ENCODE measurements at regions of chr16 and their contacts with region 1.

Region 1: GRCh38 chr16:4307215-4308037 is 8.4 kb upstream of the GLIS2 start:
- DNase-seq: peak; percentile 97 to 98 (median 97)
- ATAC-seq: peak; percentile 96
- H3K4me3 ChIP-seq: peak overlapping the region; percentile 94
- H3K4me3 Mint-ChIP-seq: peak overlapping the region; percentile 90 to 98 (median 94)
- H3K27ac ChIP-seq: peak overlapping the region; percentile 90
- H3K27ac Mint-ChIP-seq: peak overlapping the region; percentile 94 to 99 (median 95)
- H3K4me1 ChIP-seq: peaks cover 15 to 17% of the 10 kb centered on the region in 2 donors
- H3K4me1 Mint-ChIP-seq: peaks cover 13 to 30% (median 23%) of the 10 kb centered on the region in 7 donors
- H3K27me3 ChIP-seq: no peaks in the 10 kb centered on the region
- H3K27me3 Mint-ChIP-seq: peaks cover 0 to 2% (median 0%) of the 10 kb centered on the region in 5 donors

Region 2: DNA sequence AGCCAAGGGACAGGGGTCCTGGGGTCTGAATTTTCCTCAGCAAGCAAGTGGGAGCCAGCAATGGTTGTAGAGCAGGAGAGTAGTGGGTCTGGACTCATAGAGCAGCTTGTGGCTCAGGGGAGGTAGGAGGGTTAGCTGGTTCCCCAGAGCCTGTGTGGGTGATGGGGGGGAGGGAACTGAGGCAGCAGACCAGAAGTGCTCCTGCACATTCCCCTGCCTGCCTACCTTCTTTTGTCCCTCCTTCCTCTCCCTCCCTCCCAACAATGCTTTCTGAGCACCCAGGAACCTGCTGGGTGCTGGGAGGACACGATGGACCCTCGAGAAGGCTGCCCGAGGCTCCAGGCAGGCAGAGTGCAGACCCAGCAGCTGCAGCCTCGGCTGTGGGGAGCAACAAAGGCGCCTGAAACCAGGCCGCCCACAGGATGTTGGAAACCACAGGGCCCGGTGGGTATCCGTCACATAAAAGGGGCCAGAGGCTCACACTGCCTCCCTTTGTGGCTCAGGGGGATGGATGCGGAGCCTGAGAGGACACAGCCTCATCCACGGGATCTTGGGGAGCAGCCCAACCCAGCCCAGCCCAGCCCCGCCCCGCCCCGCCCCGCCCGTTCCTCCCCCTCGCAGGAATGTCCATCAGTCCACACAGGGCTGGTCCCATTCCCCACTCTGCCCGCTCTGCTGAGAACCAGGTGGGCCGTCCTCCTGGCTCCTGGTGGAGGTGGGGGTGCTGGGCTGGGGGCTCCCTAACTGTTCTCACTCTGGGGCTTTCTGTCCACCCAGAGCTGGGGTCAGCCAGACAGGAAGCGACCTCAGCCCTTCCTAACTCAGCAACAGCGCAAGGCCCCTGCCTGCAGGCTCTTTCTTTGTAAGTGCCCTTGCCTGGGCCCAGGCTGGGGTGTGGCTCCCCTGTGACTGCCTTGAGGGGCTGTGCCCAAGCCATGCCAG is 728.5 kb before region 1 on chr16:
- CTCF ChIA-PET with region 1: no interaction called
- POLR2A ChIA-PET with region 1: no interaction called
- intact Hi-C with region 1: no loop called
- DNase-seq: peak in 5 of 9 donors; percentile 15 to 70 (median 29)
- ATAC-seq: peak; percentile 64
- H3K4me3 ChIP-seq: peak overlapping the region; percentile 39
- H3K4me3 Mint-ChIP-seq: peak overlapping the region; percentile 82 to 100 (median 98)
- H3K27ac ChIP-seq: peak overlapping the region; percentile 90
- H3K27ac Mint-ChIP-seq: peak overlapping the region; percentile 83 to 97 (median 95)
- H3K4me1 ChIP-seq: peaks cover 27 to 36% of the 10 kb centered on the region in 2 donors
- H3K4me1 Mint-ChIP-seq: peaks cover 19 to 59% (median 47%) of the 10 kb centered on the region in 7 donors
- H3K27me3 ChIP-seq: no peaks in the 10 kb centered on the region
- H3K27me3 Mint-ChIP-seq: no peaks in the 10 kb centered on the region

Region 3: DNA sequence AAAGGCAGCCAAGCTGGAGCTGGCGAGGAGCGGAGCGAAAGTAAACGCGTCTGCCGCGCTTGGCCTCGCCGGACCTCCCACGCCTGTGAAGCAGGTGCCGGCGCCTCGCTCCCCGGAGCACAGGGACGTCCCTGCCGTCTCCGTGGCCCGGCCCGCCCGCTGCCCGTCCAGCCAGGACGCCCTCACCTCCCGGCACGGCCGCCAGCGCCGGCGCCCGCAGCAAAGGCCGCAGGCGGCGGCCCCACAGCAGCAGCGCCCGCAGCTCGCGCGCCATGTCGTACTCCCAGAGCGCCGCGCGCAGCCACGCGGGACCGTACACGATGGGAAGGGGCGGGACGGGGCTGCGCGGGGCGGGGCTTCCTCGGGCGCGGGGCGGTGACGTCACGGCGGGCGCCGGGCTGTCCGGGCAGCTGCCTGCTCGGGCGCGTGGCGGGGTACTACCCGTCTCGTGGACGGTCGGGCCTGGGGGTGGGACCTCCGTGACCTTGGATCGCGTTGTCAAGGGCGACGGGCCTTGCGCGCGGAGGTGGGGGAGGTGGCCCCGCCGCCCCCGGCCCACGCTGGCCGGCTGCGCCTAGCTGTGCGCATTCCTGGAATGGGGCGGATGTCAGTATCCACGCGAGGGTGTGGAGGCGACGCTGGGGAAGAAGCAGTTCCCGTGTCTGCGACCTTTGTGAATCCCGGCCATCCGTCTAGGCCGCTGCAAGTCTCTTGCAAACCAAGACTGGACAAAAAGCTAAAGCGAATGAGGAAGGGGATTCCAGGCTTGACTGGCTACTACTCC is 590.0 kb before region 1 on chr16 and contains the start of gene TRAP1:
- CTCF ChIA-PET with region 1: no interaction called
- POLR2A ChIA-PET with region 1: no interaction called
- intact Hi-C with region 1: loop called in 1 of 2 experiments (anchors 2 kb)
- DNase-seq: peak; percentile 81 to 96 (median 88)
- ATAC-seq: peak; percentile 98
- H3K4me3 ChIP-seq: peak within 1 kb of the TSS; percentile 67
- H3K4me3 Mint-ChIP-seq: peak within 1 kb of the TSS; percentile 81 to 94 (median 89)
- H3K27ac ChIP-seq: peak within 1 kb of the TSS; percentile 94
- H3K27ac Mint-ChIP-seq: peak within 1 kb of the TSS; percentile 67 to 96 (median 92)
- H3K4me1 ChIP-seq: peaks cover 6 to 11% of the 10 kb centered on the region in 2 donors
- H3K4me1 Mint-ChIP-seq: peaks cover 14 to 47% (median 38%) of the 10 kb centered on the region in 7 donors
- H3K27me3 ChIP-seq: no peaks in the 10 kb centered on the region
- H3K27me3 Mint-ChIP-seq: no peaks in the 10 kb centered on the region
- total RNA-seq, gene TRAP1: 96.8 to 138 (median 132) TPM

Region 4: DNA sequence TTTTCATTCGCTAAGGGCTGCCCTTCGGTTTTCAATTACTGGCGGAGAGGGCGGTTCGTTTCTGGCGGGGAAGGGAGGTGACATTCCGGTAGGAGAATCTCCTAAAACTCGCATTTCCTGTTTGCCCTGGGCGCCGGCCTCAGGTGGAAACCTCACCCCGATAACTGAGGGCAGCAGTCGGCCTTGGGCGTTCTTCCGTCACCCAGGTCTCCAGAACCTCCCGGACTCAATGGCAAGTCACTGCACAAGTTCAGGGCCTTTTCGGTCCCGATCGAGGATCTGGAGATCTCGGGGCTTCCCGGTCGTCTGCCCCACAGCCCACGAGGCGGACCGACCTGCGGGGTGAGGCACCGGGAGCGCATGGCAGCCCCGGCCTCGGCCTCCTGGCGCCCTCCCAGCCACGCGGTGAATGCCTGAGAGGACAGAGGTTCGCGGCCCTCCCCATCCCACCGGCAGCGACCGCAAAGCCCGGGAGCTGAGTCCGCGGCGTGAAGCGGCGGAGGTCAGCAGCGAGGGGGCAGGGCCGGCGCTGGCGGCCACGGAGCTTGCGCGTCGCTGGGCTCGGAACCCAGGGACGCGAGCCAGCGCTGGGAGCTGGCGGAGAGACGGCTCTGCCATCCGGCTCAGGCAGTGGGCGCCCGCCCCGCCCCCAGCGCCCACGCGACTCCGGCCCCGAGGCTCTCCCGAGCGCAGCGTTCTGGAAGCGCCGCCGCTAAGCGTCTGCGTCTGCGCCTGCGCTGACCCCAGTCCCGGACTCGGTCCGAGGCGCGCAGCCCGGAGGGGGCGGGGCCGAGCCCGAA is 124.0 kb before region 1 on chr16:
- CTCF ChIA-PET with region 1: no interaction called
- POLR2A ChIA-PET with region 1: no interaction called
- intact Hi-C with region 1: loop called in 1 of 2 experiments (anchors 10 kb)
- DNase-seq: peak; percentile 57 to 99 (median 67)
- ATAC-seq: peak; percentile 89
- H3K4me3 ChIP-seq: peak overlapping the region; percentile 65
- H3K4me3 Mint-ChIP-seq: peak overlapping the region; percentile 61 to 95 (median 80)
- H3K27ac ChIP-seq: peak overlapping the region; percentile 62
- H3K27ac Mint-ChIP-seq: peak overlapping the region in 2 of 9 donors; percentile 53 to 71
- H3K4me1 ChIP-seq: no peaks in the 10 kb centered on the region
- H3K4me1 Mint-ChIP-seq: peaks cover 5 to 12% (median 6%) of the 10 kb centered on the region in 7 donors
- H3K27me3 ChIP-seq: no peaks in the 10 kb centered on the region
- H3K27me3 Mint-ChIP-seq: peaks cover 0 to 18% (median 0%) of the 10 kb centered on the region in 5 donors

Region 5: DNA sequence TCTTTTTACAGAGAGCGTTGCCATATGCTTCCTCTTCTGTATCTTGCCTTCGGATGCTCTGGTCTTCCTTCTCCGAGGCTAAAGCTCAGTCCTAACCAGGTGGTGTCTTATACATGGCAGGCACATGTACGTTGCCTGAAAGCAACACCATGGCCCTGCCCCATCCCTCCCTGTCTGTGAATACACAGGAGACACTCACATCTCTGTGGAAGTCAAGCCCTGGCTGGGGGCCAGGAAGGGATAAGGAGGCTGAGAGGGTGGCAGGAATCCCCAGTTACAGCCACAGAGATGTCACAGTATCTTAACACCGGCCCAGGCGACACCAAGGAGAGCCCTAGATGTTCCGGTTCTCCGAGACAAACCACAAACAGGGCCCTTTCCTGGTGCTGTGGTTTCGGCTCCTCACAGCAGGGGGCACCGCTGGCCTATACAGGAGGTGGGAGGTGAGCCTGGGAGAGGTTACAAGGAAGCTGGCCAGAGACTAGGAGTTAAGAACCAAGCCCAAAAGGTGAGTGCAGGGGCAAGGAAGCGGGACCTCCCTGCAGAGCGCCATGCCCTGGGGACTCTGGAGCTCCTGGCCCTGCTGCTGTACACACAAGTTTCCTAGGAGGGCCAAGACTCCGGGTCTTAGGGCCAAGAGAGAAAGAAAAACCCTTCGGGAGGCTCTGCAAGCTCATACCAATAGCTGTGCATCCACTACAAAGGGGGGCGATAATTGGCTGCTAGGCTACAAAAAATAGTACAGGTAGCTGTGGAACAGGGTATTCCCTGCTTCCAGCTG is 107.2 kb before region 1 on chr16:
- CTCF ChIA-PET with region 1: no interaction called
- POLR2A ChIA-PET with region 1: no interaction called
- intact Hi-C with region 1: no loop called
- DNase-seq: peak in 4 of 9 donors; percentile 8 to 27 (median 21)
- ATAC-seq: peak; percentile 59
- H3K4me3 ChIP-seq: no peak overlapping the region
- H3K4me3 Mint-ChIP-seq: no peak overlapping the region
- H3K27ac ChIP-seq: no peak overlapping the region
- H3K27ac Mint-ChIP-seq: no peak overlapping the region
- H3K4me1 ChIP-seq: no peaks in the 10 kb centered on the region
- H3K4me1 Mint-ChIP-seq: peaks cover 0 to 7% (median 5%) of the 10 kb centered on the region in 7 donors
- H3K27me3 ChIP-seq: no peaks in the 10 kb centered on the region
- H3K27me3 Mint-ChIP-seq: peaks cover 0 to 25% (median 7%) of the 10 kb centered on the region in 5 donors

Region 6: GRCh38 chr16:4288148-4288921 is 19.1 kb before region 1 on chr16:
- CTCF ChIA-PET with region 1: interaction called, 6 read pairs
- POLR2A ChIA-PET with region 1: interaction called, 3 read pairs
- intact Hi-C with region 1: loop called (anchors 1 to 2 kb)
- DNase-seq: peak; percentile 61 to 86 (median 76)
- ATAC-seq: peak; percentile 96
- H3K4me3 ChIP-seq: no peak overlapping the region
- H3K4me3 Mint-ChIP-seq: peak overlapping the region in 1 of 10 donors; percentile 53
- H3K27ac ChIP-seq: no peak overlapping the region
- H3K27ac Mint-ChIP-seq: peak overlapping the region in 2 of 9 donors; percentile 18 to 49
- H3K4me1 ChIP-seq: peaks cover 6 to 7% of the 10 kb centered on the region in 2 donors
- H3K4me1 Mint-ChIP-seq: peaks cover 4 to 11% (median 5%) of the 10 kb centered on the region in 7 donors
- H3K27me3 ChIP-seq: no peaks in the 10 kb centered on the region
- H3K27me3 Mint-ChIP-seq: peaks cover 5 to 23% (median 11%) of the 10 kb centered on the region in 5 donors

Region 7: DNA sequence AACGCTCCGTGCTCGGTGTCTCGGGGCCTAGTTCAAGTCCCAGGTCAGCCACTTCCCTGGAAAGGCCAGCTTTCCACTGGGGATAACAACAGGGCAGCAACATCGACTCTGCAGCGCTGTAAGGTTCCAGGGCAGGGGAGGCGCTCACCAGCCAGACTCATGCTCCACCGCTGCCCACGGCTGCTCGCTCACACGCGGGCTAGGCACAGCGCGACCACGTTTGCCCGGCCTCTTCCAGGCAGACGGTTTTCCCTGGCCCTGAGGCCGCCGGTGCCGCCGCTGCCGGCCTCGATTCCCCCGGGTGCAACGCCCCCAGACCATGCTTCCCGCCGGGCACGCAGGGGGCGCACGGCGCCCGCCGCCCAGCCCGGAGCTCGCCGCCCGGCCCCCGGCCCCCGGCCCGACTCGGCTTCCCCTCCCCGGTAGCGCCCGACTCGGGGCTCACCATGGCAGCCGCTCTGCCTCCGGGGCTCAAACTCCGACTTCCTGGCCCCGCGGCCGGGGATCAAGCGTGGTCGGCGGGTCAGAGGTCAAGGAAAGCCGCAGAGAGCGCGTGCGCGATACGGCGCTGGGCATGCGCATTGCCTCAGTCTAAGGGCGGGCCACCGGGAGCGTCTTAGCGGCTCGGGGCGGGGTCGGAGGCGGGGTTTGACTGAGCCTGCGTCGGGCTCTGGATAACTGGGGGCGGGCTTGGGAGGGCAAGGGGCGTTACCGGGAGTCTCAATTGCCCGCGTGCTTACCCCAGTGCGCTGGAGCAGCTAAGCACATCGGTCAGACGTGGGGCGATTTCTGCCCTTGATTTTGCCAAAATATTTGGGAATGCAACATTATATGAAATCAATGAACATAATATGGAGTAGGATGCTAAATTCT is 43.6 kb after region 1 on chr16 and contains the start of gene PAM16:
- CTCF ChIA-PET with region 1: interaction called, 5 read pairs
- POLR2A ChIA-PET with region 1: interaction called, 12 read pairs
- intact Hi-C with region 1: loop called (anchors 1 kb)
- DNase-seq: peak; percentile 95 to 99 (median 98)
- ATAC-seq: peak; percentile 93
- H3K4me3 ChIP-seq: peak within 1 kb of the TSS; percentile 91
- H3K4me3 Mint-ChIP-seq: peak within 1 kb of the TSS; percentile 90 to 98 (median 94)
- H3K27ac ChIP-seq: peak within 1 kb of the TSS; percentile 87
- H3K27ac Mint-ChIP-seq: peak within 1 kb of the TSS; percentile 76 to 95 (median 92)
- H3K4me1 ChIP-seq: peaks cover 5 to 7% of the 10 kb centered on the region in 2 donors
- H3K4me1 Mint-ChIP-seq: peaks cover 11 to 38% (median 32%) of the 10 kb centered on the region in 7 donors
- H3K27me3 ChIP-seq: no peaks in the 10 kb centered on the region
- H3K27me3 Mint-ChIP-seq: no peaks in the 10 kb centered on the region
- total RNA-seq, gene PAM16: 34.1 to 46.2 (median 45.0) TPM

Region 8: DNA sequence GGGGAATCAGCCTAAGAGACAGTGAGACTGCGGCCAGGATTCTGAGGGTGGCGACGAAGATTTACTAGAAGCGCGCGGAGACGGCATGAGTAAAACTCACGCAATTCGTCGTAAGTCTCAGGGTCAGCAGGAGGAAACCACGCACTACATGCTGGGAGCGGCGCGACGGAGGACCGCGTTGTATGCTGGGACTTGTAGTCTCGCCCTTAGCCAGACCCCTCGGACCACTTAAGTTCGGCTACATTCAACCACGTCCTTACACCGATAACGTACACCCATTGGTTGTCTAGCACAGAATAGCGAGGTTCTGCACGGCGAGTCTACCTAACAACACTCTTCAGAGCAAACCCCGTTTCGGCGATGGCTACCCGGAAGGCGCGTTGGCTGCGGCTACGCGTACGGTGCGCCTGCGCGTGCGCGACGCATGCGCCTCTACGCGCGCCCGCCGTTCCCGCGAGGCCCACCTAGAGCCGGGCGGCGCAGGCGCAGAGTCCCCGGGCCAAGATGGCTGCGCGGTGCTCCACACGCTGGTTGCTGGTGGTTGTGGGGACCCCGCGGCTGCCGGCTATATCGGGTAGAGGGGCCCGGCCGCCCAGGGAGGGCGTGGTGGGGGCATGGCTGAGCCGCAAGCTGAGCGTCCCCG is 118.1 kb after region 1 on chr16 and contains the start of gene DNAJA3:
- CTCF ChIA-PET with region 1: no interaction called
- POLR2A ChIA-PET with region 1: no interaction called
- intact Hi-C with region 1: loop called in 1 of 2 experiments (anchors 2 kb)
- DNase-seq: peak; percentile 91 to 97 (median 95)
- ATAC-seq: peak; percentile 93
- H3K4me3 ChIP-seq: peak within 1 kb of the TSS; percentile 97
- H3K4me3 Mint-ChIP-seq: peak within 1 kb of the TSS; percentile 92 to 99 (median 98)
- H3K27ac ChIP-seq: peak within 1 kb of the TSS; percentile 95
- H3K27ac Mint-ChIP-seq: peak within 1 kb of the TSS; percentile 99 to 100 (median 100)
- H3K4me1 ChIP-seq: peaks cover 18% of the 10 kb centered on the region in 2 donors
- H3K4me1 Mint-ChIP-seq: peaks cover 26 to 37% (median 31%) of the 10 kb centered on the region in 7 donors
- H3K27me3 ChIP-seq: no peaks in the 10 kb centered on the region
- H3K27me3 Mint-ChIP-seq: peaks cover 0 to 4% (median 0%) of the 10 kb centered on the region in 5 donors
- total RNA-seq, gene DNAJA3: 33.6 to 79.8 (median 70.5) TPM

Region 9: GRCh38 chr16:4538350-4539235 is 231.2 kb after region 1 on chr16 and contains the start of gene CDIP1:
- CTCF ChIA-PET with region 1: no interaction called
- POLR2A ChIA-PET with region 1: no interaction called
- intact Hi-C with region 1: loop called in 1 of 2 experiments (anchors 1 kb)
- DNase-seq: peak; percentile 85 to 93 (median 90)
- ATAC-seq: peak; percentile 92
- H3K4me3 ChIP-seq: peak within 1 kb of the TSS; percentile 81
- H3K4me3 Mint-ChIP-seq: peak within 1 kb of the TSS; percentile 66 to 91 (median 82)
- H3K27ac ChIP-seq: peak within 1 kb of the TSS; percentile 96
- H3K27ac Mint-ChIP-seq: peak within 1 kb of the TSS; percentile 78 to 97 (median 92)
- H3K4me1 ChIP-seq: peaks cover 10 to 33% of the 10 kb centered on the region in 2 donors
- H3K4me1 Mint-ChIP-seq: peaks cover 24 to 44% (median 40%) of the 10 kb centered on the region in 7 donors
- H3K27me3 ChIP-seq: no peaks in the 10 kb centered on the region
- H3K27me3 Mint-ChIP-seq: peaks cover 0 to 9% (median 0%) of the 10 kb centered on the region in 5 donors
- total RNA-seq, gene CDIP1: 28.1 to 41.1 (median 31.0) TPM

Measured in naive thymus-derived CD4-positive, alpha-beta T cell (primary cell).